ENCODE measurements at regions of chr9 and their contacts with region 1.

Region 1: DNA sequence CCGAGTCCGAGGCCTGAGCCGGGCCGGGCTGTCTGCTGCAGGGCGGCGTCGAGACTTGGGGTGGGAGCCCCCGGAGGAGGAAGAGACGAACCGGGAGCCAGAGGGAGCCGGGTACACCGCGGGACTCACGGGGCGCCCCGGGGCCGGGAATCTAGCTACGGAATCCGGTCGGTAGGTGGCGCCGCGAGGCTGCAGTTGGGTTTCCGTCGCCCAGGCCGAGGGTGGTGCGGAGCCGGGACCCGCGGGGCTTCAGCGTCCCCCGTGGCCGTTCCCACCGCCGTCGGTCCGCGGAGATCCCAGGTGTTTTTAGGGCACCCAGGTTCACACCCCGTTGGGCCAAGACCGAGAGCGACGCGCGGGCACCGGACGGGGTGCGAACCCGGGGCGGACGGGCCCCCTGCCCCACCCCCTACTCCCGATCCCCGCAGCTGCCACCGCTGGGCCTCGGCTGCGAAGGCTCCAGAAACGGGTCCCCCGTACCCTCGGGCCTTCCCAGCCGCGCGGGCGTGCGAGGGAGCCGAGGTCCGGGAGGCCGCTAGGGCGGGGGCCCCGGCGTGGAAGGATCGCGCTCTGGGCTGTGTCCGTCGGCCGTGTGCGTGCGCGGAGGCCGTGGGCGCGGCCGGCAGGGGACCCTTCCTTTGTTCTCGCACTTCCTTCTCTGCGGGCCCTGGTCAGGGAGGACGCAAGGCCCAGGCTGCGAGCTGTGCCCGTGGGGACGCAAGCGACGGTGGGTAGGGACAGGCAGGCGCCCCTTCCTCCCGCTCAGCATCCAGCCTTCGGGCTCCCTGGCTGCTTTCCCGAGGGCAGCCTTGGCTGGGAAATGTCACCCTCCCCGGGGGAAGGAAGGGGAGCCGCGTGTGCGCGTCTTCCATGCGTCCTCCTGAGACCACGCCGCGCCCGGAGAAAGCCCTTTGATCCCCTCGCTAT is 146.6 kb downstream of the GAPVD1 start:
- ATAC-seq: peak; percentile 79 to 95 (median 88)
- H3K4me3 ChIP-seq: peak overlapping the region; percentile 27 to 48 (median 31)
- H3K27ac ChIP-seq: peak overlapping the region in 1 of 2 donors; percentile 0
- H3K4me1 ChIP-seq: peaks cover 0 to 9% of the 10 kb centered on the region in 2 donors

Region 2: DNA sequence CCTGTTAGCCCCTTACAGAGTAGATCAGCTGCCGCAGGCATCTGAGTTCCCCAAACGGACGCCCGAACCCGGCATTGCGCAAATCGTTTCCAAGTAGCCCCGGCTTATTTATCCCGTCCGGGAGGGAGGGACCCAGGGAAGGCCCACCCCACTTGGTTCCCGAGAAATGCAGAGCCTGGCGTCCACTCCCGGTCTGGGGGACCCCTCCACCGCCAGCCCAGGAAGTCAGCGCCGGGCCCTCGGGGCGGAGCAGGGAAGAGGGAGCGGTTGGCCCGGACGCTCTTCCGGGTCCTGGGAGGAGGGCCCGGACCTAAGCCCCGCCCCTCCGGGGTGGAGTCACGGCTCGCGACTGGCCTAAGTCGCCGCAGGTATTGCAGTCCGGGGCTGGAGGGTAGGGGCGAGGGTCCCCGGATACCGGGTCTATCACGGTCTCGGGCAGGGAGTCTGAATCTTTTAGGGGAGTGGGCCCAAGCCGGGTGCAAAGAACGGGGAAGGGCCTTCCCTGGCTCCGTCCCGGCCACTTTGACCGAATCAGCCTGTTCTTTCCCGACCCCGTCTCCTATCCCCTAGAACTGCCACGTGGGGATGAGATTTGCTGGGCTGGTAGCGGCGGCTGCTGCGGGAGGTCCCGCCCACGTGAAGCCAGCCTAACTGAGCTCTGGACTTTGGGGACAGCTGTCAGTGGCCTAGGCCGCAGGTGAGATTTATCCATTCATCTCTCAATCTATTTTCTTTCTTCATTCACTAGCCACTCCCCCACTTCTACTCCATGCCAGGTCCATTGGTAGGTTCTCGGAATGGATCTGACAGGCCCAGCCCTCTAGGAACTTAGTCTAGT is 207.8 kb before region 1 on chr9 and contains the start of gene RABEPK:
- in situ Hi-C with region 1: no loop called
- ATAC-seq: peak; percentile 93 to 99 (median 98)
- H3K4me3 ChIP-seq: peak within 1 kb of the TSS; percentile 60 to 81 (median 66)
- H3K27ac ChIP-seq: peak within 1 kb of the TSS; percentile 64 to 71
- H3K4me1 ChIP-seq: peaks cover 4 to 6% of the 10 kb centered on the region in 2 donors
- total RNA-seq, gene RABEPK: 17.0 to 32.2 (median 22.1) TPM

Region 3: GRCh38 chr9:125261501-125262293 is 146.5 kb before region 1 on chr9 and contains the start of gene GAPVD1:
- in situ Hi-C with region 1: no loop called
- ATAC-seq: peak; percentile 94 to 99 (median 96)
- H3K4me3 ChIP-seq: peak within 1 kb of the TSS; percentile 70 to 95 (median 79)
- H3K27ac ChIP-seq: peak within 1 kb of the TSS; percentile 79 to 86
- H3K4me1 ChIP-seq: peaks cover 5 to 11% of the 10 kb centered on the region in 2 donors
- total RNA-seq, gene GAPVD1: 29.9 to 69.7 (median 41.2) TPM

Region 4: GRCh38 chr9:125746017-125746773 is 338.0 kb after region 1 on chr9:
- in situ Hi-C with region 1: loop called in 2 of 9 experiments (anchors 25 kb)
- ATAC-seq: peak; percentile 76 to 89 (median 86)
- H3K4me3 ChIP-seq: peak overlapping the region; percentile 77 to 100 (median 92)
- H3K27ac ChIP-seq: peak overlapping the region; percentile 91 to 92
- H3K4me1 ChIP-seq: peaks cover under 1 to 3% of the 10 kb centered on the region in 2 donors

Region 5: GRCh38 chr9:125990751-125991220 is 582.5 kb after region 1 on chr9:
- in situ Hi-C with region 1: no loop called
- ATAC-seq: peak in 5 of 8 experiments; percentile 13 to 61 (median 32)
- H3K4me3 ChIP-seq: no peak overlapping the region
- H3K27ac ChIP-seq: no peak overlapping the region
- H3K4me1 ChIP-seq: peaks cover 22 to 30% of the 10 kb centered on the region in 2 donors

Region 6: GRCh38 chr9:126228781-126229444 is 820.7 kb after region 1 on chr9:
- in situ Hi-C with region 1: loop called in 6 of 9 experiments (anchors 25 kb)
- ATAC-seq: peak; percentile 87 to 99 (median 94)
- H3K4me3 ChIP-seq: no peak overlapping the region
- H3K27ac ChIP-seq: peak overlapping the region in 1 of 2 donors; percentile 89
- H3K4me1 ChIP-seq: peaks cover 26 to 30% of the 10 kb centered on the region in 2 donors

Region 7: GRCh38 chr9:126398403-126399058 is 990.3 kb after region 1 on chr9:
- in situ Hi-C with region 1: loop called in 4 of 9 experiments (anchors 25 kb)
- ATAC-seq: peak; percentile 83 to 97 (median 93)
- H3K4me3 ChIP-seq: no peak overlapping the region
- H3K27ac ChIP-seq: no peak overlapping the region
- H3K4me1 ChIP-seq: peaks cover 2 to 8% of the 10 kb centered on the region in 2 donors

Region 8: GRCh38 chr9:126411225-126411947 is 1003.1 kb after region 1 on chr9:
- in situ Hi-C with region 1: loop called in 1 of 9 experiments (anchors 25 kb)
- ATAC-seq: peak in 1 of 8 experiments; percentile 41
- H3K4me3 ChIP-seq: no peak overlapping the region
- H3K27ac ChIP-seq: no peak overlapping the region
- H3K4me1 ChIP-seq: peaks cover 9 to 25% of the 10 kb centered on the region in 2 donors

Region 9: GRCh38 chr9:126490871-126491567 is 1082.8 kb after region 1 on chr9:
- in situ Hi-C with region 1: loop called in 3 of 9 experiments (anchors 25 kb)
- ATAC-seq: peak; percentile 39 to 70 (median 50)
- H3K4me3 ChIP-seq: no peak overlapping the region
- H3K27ac ChIP-seq: no peak overlapping the region
- H3K4me1 ChIP-seq: peaks cover 0 to 25% of the 10 kb centered on the region in 2 donors

Measured in motor neuron (in vitro differentiated cells).